ENCODE measurements at regions of chr12 and their contacts with region 1.

Region 1: DNA sequence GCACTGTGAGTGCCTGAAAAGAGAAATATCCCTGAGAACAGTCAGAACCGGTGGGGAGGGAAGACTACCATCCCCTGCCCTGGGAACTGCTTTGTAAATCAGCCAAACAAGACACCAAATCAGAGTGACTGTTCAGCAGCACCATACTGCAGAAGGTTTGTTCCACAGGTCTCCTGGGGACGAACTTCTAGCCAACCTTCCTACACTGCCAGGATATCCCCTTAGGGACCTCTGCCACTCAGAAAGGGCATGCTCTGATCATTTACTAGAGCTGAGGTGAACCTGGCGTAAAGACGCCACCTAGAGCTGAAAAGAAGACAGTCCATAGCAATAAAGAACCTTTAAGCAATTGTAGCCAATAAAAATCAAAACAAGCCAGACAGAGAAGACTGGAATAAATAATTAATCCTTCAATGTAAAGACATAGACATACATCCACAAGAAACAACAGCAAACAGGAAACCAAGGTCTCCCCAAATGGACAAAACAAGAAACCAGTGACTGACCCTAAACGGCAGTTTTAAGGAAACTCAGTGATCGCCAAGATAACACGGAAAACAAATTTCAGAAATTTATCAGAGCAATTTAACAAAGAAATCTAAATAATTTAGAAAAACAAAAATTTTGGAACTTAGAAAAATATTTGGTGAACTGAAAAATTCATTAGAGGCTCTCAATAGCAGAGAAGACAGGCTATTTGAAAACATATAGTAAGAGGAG is 228.1 kb upstream of the AMIGO2 start:
- DNase-seq: peak; percentile 84
- ATAC-seq: peak; percentile 84
- H3K4me3 ChIP-seq: peak overlapping the region; percentile 64 to 90 (median 73)
- H3K4me3 Mint-ChIP-seq: peak overlapping the region; percentile 94
- H3K27ac ChIP-seq: peak overlapping the region; percentile 73 to 74
- H3K27ac Mint-ChIP-seq: peak overlapping the region; percentile 90
- H3K4me1 ChIP-seq: peaks cover 10 to 29% of the 10 kb centered on the region in 2 donors
- H3K4me1 Mint-ChIP-seq: peaks cover 53% of the 10 kb centered on the region
- H3K27me3 ChIP-seq: no peaks in the 10 kb centered on the region
- H3K27me3 Mint-ChIP-seq: no peaks in the 10 kb centered on the region
- CTCF ChIP-seq: peak; percentile 76

Region 2: DNA sequence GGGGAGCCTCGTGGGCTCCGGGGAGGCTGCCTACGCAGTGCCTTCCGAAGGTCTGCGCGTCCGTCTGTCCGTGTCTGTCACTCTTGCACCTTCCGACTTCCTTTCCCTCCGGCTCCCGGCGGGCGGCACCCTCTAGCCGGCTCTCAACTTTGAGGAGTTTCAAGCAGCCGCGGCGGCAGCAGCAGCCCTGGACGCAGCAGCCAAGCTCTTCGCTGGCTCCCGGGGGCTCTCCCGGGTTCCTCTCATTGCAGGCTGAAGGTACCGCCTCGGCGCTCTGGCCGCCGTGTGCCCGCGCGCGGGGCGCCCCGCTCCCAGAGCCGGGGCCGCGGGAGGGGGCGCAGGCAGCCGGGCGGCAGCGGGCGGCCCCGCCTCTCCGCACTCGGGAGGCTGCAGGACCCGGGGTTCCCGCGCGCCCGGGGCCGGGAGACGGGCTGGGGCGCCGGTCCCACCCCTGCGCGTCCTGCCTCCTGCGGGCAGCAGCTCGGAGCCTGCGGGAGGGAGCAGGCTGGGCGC is 228.3 kb before region 1 on chr12 and contains the starts of genes AMIGO2 and PCED1B:
- CTCF ChIA-PET with region 1: interaction called, 28 read pairs
- POLR2A ChIA-PET with region 1: interaction called, 3 read pairs
- intact Hi-C with region 1: loop called (anchors 1 kb)
- DNase-seq: peak; percentile 68
- ATAC-seq: peak; percentile 50
- H3K4me3 ChIP-seq: peak within 1 kb of the TSS; percentile 74 to 92 (median 83)
- H3K4me3 Mint-ChIP-seq: peak within 1 kb of the TSS; percentile 98
- H3K27ac ChIP-seq: peak within 1 kb of the TSS; percentile 53 to 78
- H3K27ac Mint-ChIP-seq: peak within 1 kb of the TSS; percentile 91
- H3K4me1 ChIP-seq: peaks cover 17 to 29% of the 10 kb centered on the region in 2 donors
- H3K4me1 Mint-ChIP-seq: peaks cover 59% of the 10 kb centered on the region
- H3K27me3 ChIP-seq: no peaks in the 10 kb centered on the region
- H3K27me3 Mint-ChIP-seq: no peaks in the 10 kb centered on the region
- CTCF ChIP-seq: no peak
- total RNA-seq, gene AMIGO2: 9.2 and 10.4 TPM in 2 replicates
- total RNA-seq, gene PCED1B: 45.8 and 48.0 TPM in 2 replicates

Region 3: GRCh38 chr12:47207340-47207717 is 100.5 kb before region 1 on chr12:
- CTCF ChIA-PET with region 1: interaction called, 22 read pairs
- POLR2A ChIA-PET with region 1: interaction called, 4 read pairs
- intact Hi-C with region 1: no loop called
- DNase-seq: peak; percentile 87
- ATAC-seq: peak; percentile 85
- H3K4me3 ChIP-seq: peak overlapping the region in 2 of 5 experiments; percentile 7 to 31
- H3K4me3 Mint-ChIP-seq: peak overlapping the region; percentile 75
- H3K27ac ChIP-seq: peak overlapping the region; percentile 78 to 84
- H3K27ac Mint-ChIP-seq: peak overlapping the region; percentile 94
- H3K4me1 ChIP-seq: peaks cover 71 to 80% of the 10 kb centered on the region in 2 donors
- H3K4me1 Mint-ChIP-seq: peaks cover 77% of the 10 kb centered on the region
- H3K27me3 ChIP-seq: no peaks in the 10 kb centered on the region
- H3K27me3 Mint-ChIP-seq: no peaks in the 10 kb centered on the region
- CTCF ChIP-seq: no peak

Region 4: DNA sequence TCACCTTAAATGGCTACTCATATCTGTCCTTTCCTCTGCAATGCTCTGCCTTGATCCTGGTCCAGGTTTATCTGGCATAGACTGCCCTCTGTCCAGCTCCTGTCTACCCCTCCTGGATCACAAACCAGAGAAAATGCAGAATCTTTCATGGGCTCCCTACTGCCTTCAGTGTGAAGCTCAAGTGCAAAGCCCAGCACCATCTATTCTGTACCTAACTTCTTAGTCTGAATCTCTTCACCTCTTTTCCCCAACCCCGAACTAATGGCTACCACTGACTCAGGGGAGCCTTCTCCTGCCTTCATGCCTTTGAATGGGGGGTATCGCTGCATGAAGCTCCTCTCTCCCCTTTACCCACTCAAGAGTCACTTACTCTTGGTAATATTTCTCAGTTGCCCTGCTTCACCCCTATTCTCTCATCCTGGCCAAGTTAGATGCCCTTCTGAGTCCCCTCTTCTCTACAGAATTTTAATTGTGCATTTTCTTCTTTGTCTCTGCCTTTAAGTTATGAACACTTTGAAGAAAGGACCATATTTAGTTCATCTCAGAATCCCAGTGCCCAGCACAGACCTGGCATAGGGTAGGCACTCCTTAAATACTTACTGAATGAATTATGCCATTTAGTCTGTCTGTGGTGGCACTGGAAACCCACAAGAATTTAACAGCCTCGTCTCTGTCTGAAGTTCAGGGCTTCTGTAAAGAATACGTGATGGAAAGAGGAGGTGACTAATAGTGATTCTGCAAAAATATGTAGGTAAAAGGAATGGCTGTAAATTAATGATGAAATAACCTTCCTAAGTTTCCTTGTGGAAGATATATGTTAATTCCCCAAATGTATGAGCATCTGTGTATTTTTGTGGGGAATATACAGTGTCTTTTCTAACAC is 36.8 kb before region 1 on chr12:
- CTCF ChIA-PET with region 1: interaction called, 11 read pairs
- POLR2A ChIA-PET with region 1: interaction called, 4 read pairs
- intact Hi-C with region 1: loop called (anchors 2 kb)
- DNase-seq: no peak
- ATAC-seq: no peak
- H3K4me3 ChIP-seq: no peak overlapping the region
- H3K4me3 Mint-ChIP-seq: peak overlapping the region; percentile 15
- H3K27ac ChIP-seq: no peak overlapping the region
- H3K27ac Mint-ChIP-seq: peak overlapping the region; percentile 70
- H3K4me1 ChIP-seq: peaks cover 62 to 67% of the 10 kb centered on the region in 2 donors
- H3K4me1 Mint-ChIP-seq: peaks cover 85% of the 10 kb centered on the region
- H3K27me3 ChIP-seq: no peaks in the 10 kb centered on the region
- H3K27me3 Mint-ChIP-seq: no peaks in the 10 kb centered on the region
- CTCF ChIP-seq: no peak

Region 5: GRCh38 chr12:47356129-47356700 is 48.4 kb after region 1 on chr12:
- CTCF ChIA-PET with region 1: interaction called, 7 read pairs
- POLR2A ChIA-PET with region 1: interaction called, 3 read pairs
- intact Hi-C with region 1: loop called (anchors 1 kb)
- DNase-seq: peak; percentile 93
- ATAC-seq: peak; percentile 77
- H3K4me3 ChIP-seq: peak overlapping the region in 1 of 5 experiments; percentile 31
- H3K4me3 Mint-ChIP-seq: peak overlapping the region; percentile 74
- H3K27ac ChIP-seq: peak overlapping the region; percentile 91 to 95
- H3K27ac Mint-ChIP-seq: peak overlapping the region; percentile 98
- H3K4me1 ChIP-seq: peaks cover 71 to 80% of the 10 kb centered on the region in 2 donors
- H3K4me1 Mint-ChIP-seq: peaks cover 78% of the 10 kb centered on the region
- H3K27me3 ChIP-seq: no peaks in the 10 kb centered on the region
- H3K27me3 Mint-ChIP-seq: no peaks in the 10 kb centered on the region
- CTCF ChIP-seq: no peak

Measured in B cell (primary cell).